ENCODE measurements at regions of chr10 and their contacts with region 1.

Region 1: GRCh38 chr10:72834183-72834825 is 59.2 kb upstream of the OIT3 start:
- DNase-seq: no peak
- H3K4me3 ChIP-seq: no peak overlapping the region
- H3K27ac ChIP-seq: no peak overlapping the region
- H3K4me1 ChIP-seq: peaks cover 0 to 46% (median 0%) of the 10 kb centered on the region in 4 donors
- H3K27me3 ChIP-seq: no peaks in the 10 kb centered on the region
- CTCF ChIP-seq: peak; percentile 52 to 66 (median 53)
- EP300 ChIP-seq: no peak
- POLR2A ChIP-seq: no peak

Region 2: DNA sequence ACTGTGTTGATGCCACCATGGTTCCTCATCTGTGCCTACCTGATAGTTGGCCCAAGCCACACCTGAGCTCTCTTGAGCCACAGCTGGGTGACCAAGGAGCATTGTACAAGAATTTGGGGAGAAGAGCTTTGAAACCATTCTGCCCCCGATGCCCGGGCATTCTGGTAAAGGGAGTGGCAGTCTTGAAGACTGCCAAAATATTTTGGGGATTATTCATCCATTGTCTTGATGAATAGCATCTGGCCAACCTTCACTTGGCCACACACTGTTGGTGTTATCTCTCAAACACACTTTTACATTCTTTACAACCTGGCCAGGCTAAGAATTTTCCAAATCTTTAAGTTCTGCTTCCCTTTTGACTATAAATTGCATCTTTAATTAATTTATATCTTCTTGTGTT is 1832.8 kb before region 1 on chr10:
- in situ Hi-C with region 1: no loop called
- intact Hi-C with region 1: no loop called
- DNase-seq: no peak
- H3K4me3 ChIP-seq: no peak overlapping the region
- H3K27ac ChIP-seq: no peak overlapping the region
- H3K4me1 ChIP-seq: no peaks in the 10 kb centered on the region
- H3K27me3 ChIP-seq: peaks cover 4% of the 10 kb centered on the region
- CTCF ChIP-seq: no peak
- EP300 ChIP-seq: no peak
- POLR2A ChIP-seq: no peak

Region 3: GRCh38 chr10:72503241-72503640 is 331.1 kb before region 1 on chr10:
- in situ Hi-C with region 1: no loop called
- intact Hi-C with region 1: loop called (anchors 10 kb)
- DNase-seq: no peak
- H3K4me3 ChIP-seq: no peak overlapping the region
- H3K27ac ChIP-seq: no peak overlapping the region
- H3K4me1 ChIP-seq: no peaks in the 10 kb centered on the region
- H3K27me3 ChIP-seq: no peaks in the 10 kb centered on the region
- CTCF ChIP-seq: no peak
- EP300 ChIP-seq: no peak
- POLR2A ChIP-seq: no peak

Region 4: DNA sequence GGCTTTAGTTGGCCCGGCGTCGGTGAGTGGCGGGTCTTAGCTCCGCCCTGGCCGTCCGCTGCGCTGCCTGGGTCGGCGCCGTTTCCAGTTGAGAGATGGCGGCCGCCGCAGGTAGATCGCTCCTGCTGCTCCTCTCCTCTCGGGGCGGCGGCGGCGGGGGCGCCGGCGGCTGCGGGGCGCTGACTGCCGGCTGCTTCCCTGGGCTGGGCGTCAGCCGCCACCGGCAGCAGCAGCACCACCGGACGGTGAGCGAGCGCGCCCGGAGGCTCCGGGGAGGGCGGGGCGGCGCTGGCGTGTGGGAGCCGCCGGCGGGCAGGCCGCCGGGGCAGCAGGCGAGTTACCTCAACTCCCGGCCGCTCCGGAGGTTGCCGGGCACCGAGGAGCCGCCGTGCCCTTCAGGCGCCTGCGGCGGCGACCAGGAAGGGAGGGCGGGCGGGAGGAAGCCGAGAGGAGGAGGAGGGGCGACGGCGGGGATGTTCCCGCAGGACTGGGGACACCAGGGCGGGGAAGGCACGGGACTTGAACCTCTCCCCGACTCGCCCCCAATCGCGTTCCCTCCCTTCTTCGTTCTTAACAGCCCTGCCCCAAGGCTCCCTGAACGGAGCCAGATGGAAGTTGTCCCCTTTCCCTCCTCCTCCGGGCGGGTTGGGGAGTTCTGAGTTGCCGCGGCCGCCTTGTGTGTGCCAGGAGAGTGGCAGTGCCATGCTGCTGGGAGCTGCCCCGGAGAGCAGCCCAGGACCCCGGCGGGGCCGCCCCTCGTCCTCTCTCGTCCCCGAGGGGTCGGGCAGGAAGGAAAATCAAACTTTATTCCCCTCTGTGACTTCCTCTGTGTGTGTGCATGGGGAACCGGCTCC is 142.0 kb before region 1 on chr10 and contains the start of gene MCU:
- in situ Hi-C with region 1: loop called in 1 of 4 experiments (anchors 10 kb)
- intact Hi-C with region 1: loop called (anchors 10 kb)
- DNase-seq: peak; percentile 96
- H3K4me3 ChIP-seq: peak within 1 kb of the TSS; percentile 36 to 85 (median 68)
- H3K27ac ChIP-seq: peak within 1 kb of the TSS; percentile 88 to 96 (median 94)
- H3K4me1 ChIP-seq: peaks cover 14 to 34% (median 31%) of the 10 kb centered on the region in 4 donors
- H3K27me3 ChIP-seq: no peaks in the 10 kb centered on the region
- CTCF ChIP-seq: peak in 2 of 5 experiments; percentile 32 to 34
- EP300 ChIP-seq: no peak
- POLR2A ChIP-seq: peak; percentile 72
- total RNA-seq, gene MCU: 25.1 to 82.4 (median 65.1) TPM

Region 5: DNA sequence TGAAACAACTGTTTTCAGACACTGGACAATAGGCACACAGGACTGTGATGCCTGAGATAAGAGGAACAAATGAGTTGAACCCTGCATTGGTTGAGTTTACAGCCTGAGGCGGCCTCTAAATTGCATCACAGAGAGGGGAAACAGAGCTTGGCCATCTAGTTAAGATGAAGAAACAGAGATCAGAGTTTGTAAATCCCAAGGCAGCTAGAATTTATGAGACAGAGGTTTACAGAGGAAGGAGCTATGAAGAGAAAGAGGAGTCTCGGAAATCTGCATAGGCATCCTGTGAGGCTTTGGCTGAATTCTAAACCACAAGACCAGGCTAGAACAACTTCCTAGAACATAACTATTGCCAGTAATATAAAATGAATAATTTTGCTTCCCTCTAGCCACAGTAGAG is 18.2 kb after region 1 on chr10:
- in situ Hi-C with region 1: no loop called
- intact Hi-C with region 1: no loop called
- DNase-seq: no peak
- H3K4me3 ChIP-seq: no peak overlapping the region
- H3K27ac ChIP-seq: no peak overlapping the region
- H3K4me1 ChIP-seq: no peaks in the 10 kb centered on the region
- H3K27me3 ChIP-seq: no peaks in the 10 kb centered on the region
- CTCF ChIP-seq: no peak
- EP300 ChIP-seq: no peak
- POLR2A ChIP-seq: no peak

Region 6: GRCh38 chr10:72875250-72876055 is 41.1 kb after region 1 on chr10:
- in situ Hi-C with region 1: no loop called
- intact Hi-C with region 1: no loop called
- DNase-seq: no peak
- H3K4me3 ChIP-seq: no peak overlapping the region
- H3K27ac ChIP-seq: no peak overlapping the region
- H3K4me1 ChIP-seq: no peaks in the 10 kb centered on the region
- H3K27me3 ChIP-seq: no peaks in the 10 kb centered on the region
- CTCF ChIP-seq: peak; percentile 20 to 40 (median 34)
- EP300 ChIP-seq: no peak
- POLR2A ChIP-seq: no peak